ENCODE measurements at regions of chr12 and their contacts with region 1.

Region 1: DNA sequence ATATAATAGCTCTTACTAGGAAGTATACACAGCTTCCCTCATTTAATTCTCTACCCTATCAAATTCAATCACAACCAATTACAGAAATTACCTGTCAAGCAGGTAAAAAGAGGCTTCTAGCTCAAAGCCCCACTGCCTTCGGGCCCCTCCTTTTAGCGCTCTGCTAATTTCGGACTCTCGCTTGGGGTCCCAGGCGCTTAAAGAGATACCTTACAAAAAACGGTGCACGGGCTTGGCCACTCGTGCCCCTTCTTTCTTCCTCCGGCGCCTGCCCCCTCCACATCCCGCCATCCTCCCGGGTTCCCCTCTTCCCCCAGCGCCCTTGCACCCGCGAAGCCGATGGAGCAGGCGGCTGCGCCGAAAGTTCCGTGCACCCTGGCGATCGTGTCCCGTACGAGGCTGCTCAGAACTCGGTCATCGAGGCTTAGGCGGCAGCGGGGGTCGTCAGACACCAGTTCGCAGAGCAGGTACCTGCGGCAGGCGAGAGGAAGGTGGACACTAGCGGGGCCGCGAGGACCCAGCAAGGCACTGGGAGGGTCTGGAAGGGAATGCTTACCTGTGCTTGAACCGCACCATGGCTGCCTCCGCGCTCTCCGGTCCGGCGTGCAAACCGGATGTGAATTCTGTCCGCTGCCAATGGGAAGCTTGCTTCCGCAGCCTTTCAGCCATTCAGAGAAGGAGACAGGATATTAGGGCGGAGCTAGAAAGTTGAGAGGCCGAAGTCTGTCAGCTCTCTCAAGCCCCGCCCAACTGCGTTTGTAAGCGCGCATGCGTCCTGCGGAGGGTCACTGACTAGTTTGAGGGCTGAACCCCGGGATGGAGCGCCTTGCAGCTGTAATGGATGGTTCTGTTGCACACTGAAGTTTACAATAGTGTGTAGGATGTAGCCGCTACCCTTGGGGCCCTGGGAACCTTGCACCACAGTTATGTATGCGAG is at the start of gene POP5:
- DNase-seq: peak; percentile 72 to 93 (median 89)
- ATAC-seq: peak; percentile 97
- H3K4me3 ChIP-seq: peak within 1 kb of the TSS; percentile 99
- H3K4me3 Mint-ChIP-seq: peak within 1 kb of the TSS; percentile 95 to 99 (median 98)
- H3K27ac ChIP-seq: peak within 1 kb of the TSS; percentile 77
- H3K27ac Mint-ChIP-seq: peak within 1 kb of the TSS; percentile 81 to 97 (median 94)
- H3K4me1 ChIP-seq: peaks cover 4 to 21% of the 10 kb centered on the region in 2 donors
- H3K4me1 Mint-ChIP-seq: peaks cover 24 to 47% (median 34%) of the 10 kb centered on the region in 7 donors
- H3K27me3 ChIP-seq: no peaks in the 10 kb centered on the region
- H3K27me3 Mint-ChIP-seq: peaks cover 0 to 27% (median 7%) of the 10 kb centered on the region in 5 donors
- total RNA-seq, gene POP5: 42.9 to 86.8 (median 59.0) TPM

Region 2: DNA sequence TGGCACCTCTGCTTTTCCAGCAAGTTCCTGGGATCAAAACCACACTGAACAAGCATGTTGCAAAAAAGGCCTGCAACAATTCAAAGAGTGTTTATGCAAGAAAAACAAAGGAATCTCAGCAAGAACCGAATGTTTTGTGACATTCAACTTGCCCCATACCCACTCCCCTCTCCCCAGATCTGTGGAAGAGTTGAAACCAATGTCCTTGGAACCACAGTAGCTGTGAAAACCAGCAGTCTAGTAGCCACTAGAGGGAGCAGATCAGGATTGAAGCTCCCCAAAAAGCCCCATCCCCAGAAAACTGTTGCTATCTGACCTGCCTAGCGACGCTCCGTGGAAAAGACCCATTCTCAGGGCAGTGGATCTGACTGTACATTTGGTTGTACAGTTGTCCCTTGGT is 886.0 kb before region 1 on chr12:
- CTCF ChIA-PET with region 1: no interaction called
- POLR2A ChIA-PET with region 1: no interaction called
- intact Hi-C with region 1: no loop called
- DNase-seq: no peak
- ATAC-seq: no peak
- H3K4me3 ChIP-seq: no peak overlapping the region
- H3K4me3 Mint-ChIP-seq: no peak overlapping the region
- H3K27ac ChIP-seq: no peak overlapping the region
- H3K27ac Mint-ChIP-seq: no peak overlapping the region
- H3K4me1 ChIP-seq: no peaks in the 10 kb centered on the region
- H3K4me1 Mint-ChIP-seq: no peaks in the 10 kb centered on the region
- H3K27me3 ChIP-seq: no peaks in the 10 kb centered on the region
- H3K27me3 Mint-ChIP-seq: peaks cover 0 to 3% (median 0%) of the 10 kb centered on the region in 5 donors

Region 3: GRCh38 chr12:120292661-120293531 is 288.2 kb before region 1 on chr12 and contains the start of gene RNU4-1:
- CTCF ChIA-PET with region 1: no interaction called
- POLR2A ChIA-PET with region 1: interaction called, 10 read pairs
- intact Hi-C with region 1: no loop called
- DNase-seq: peak; percentile 51 to 93 (median 89)
- ATAC-seq: peak; percentile 58
- H3K4me3 ChIP-seq: peak within 1 kb of the TSS; percentile 64
- H3K4me3 Mint-ChIP-seq: no peak within 1 kb of the TSS
- H3K27ac ChIP-seq: peak within 1 kb of the TSS; percentile 100
- H3K27ac Mint-ChIP-seq: peak within 1 kb of the TSS in 1 of 9 donors; percentile 62
- H3K4me1 ChIP-seq: no peaks in the 10 kb centered on the region
- H3K4me1 Mint-ChIP-seq: peaks cover 0 to 9% (median 4%) of the 10 kb centered on the region in 7 donors
- H3K27me3 ChIP-seq: no peaks in the 10 kb centered on the region
- H3K27me3 Mint-ChIP-seq: peaks cover 0 to 14% (median 0%) of the 10 kb centered on the region in 5 donors
- total RNA-seq, gene RNU4-1: 319 to 3,107 (median 1,510) TPM

Region 4: GRCh38 chr12:120445911-120446843 is 134.9 kb before region 1 on chr12 and contains the starts of genes GATC and TRIAP1:
- CTCF ChIA-PET with region 1: no interaction called
- POLR2A ChIA-PET with region 1: no interaction called
- intact Hi-C with region 1: loop called in 1 of 2 experiments (anchors 5 kb)
- DNase-seq: peak; percentile 76 to 93 (median 84)
- ATAC-seq: peak; percentile 98
- H3K4me3 ChIP-seq: peak within 1 kb of the TSS; percentile 99
- H3K4me3 Mint-ChIP-seq: peak within 1 kb of the TSS; percentile 93 to 99 (median 98)
- H3K27ac ChIP-seq: peak within 1 kb of the TSS; percentile 91
- H3K27ac Mint-ChIP-seq: peak within 1 kb of the TSS; percentile 95 to 100 (median 98)
- H3K4me1 ChIP-seq: peaks cover 15 to 24% of the 10 kb centered on the region in 2 donors
- H3K4me1 Mint-ChIP-seq: peaks cover 14 to 45% (median 29%) of the 10 kb centered on the region in 7 donors
- H3K27me3 ChIP-seq: no peaks in the 10 kb centered on the region
- H3K27me3 Mint-ChIP-seq: peaks cover 0 to 2% (median 0%) of the 10 kb centered on the region in 5 donors
- total RNA-seq, gene GATC: 21.8 to 30.6 (median 26.9) TPM
- total RNA-seq, gene TRIAP1: 15.9 to 38.0 (median 19.6) TPM

Region 5: GRCh38 chr12:120528861-120529525 is 52.1 kb before region 1 on chr12 and contains the start of gene COQ5:
- CTCF ChIA-PET with region 1: no interaction called
- POLR2A ChIA-PET with region 1: interaction called, 8 read pairs
- intact Hi-C with region 1: loop called (anchors 1 kb)
- DNase-seq: peak; percentile 64 to 83 (median 80)
- ATAC-seq: peak; percentile 97
- H3K4me3 ChIP-seq: peak within 1 kb of the TSS; percentile 75
- H3K4me3 Mint-ChIP-seq: peak within 1 kb of the TSS; percentile 93 to 100 (median 99)
- H3K27ac ChIP-seq: peak within 1 kb of the TSS; percentile 88
- H3K27ac Mint-ChIP-seq: peak within 1 kb of the TSS; percentile 96 to 100 (median 98)
- H3K4me1 ChIP-seq: no peaks in the 10 kb centered on the region
- H3K4me1 Mint-ChIP-seq: peaks cover 10 to 30% (median 23%) of the 10 kb centered on the region in 7 donors
- H3K27me3 ChIP-seq: no peaks in the 10 kb centered on the region
- H3K27me3 Mint-ChIP-seq: no peaks in the 10 kb centered on the region
- total RNA-seq, gene COQ5: 11.3 to 26.1 (median 23.5) TPM

Region 6: DNA sequence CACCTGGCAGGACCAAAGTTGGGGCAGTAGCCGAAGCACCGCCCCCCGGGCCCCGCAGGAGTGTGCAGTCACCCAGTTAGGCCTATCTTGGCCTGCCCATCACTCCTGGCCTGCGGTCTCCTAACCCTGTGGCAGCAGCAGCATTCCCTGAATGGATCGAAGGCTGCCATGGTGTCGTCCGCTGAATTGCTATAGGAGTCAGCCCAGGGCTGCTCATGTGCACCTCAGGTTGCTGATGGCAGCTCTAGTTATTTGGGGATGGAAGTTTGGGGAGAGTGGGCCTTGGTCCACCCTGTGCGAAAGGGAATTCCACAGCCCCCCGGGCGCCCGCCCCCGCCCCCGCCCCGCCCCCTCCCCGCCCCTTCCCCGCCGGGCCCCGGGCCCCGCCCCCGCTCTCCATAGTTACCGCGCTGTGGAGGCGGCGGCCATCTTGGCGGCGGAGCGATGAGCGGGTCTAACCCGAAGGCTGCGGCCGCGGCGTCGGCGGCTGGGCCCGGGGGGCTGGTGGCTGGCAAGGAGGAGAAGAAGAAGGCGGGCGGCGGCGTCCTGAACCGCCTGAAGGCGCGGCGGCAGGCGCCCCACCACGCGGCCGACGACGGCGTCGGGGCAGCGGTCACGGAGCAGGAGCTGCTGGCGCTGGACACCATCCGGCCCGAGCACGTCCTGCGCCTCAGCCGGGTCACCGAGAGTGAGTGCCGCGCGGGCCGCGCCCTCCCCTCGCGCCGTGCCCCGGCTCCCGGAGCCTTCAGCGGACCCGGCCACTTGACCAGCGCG is 129.2 kb after region 1 on chr12 and contains the start of gene UNC119B:
- CTCF ChIA-PET with region 1: interaction called, 3 read pairs
- POLR2A ChIA-PET with region 1: interaction called, 3 read pairs
- intact Hi-C with region 1: loop called (anchors 1 kb)
- DNase-seq: peak; percentile 53 to 82 (median 69)
- ATAC-seq: peak; percentile 92
- H3K4me3 ChIP-seq: peak within 1 kb of the TSS; percentile 69
- H3K4me3 Mint-ChIP-seq: peak within 1 kb of the TSS; percentile 87 to 98 (median 95)
- H3K27ac ChIP-seq: peak within 1 kb of the TSS; percentile 83
- H3K27ac Mint-ChIP-seq: peak within 1 kb of the TSS; percentile 87 to 96 (median 92)
- H3K4me1 ChIP-seq: peaks cover 5 to 7% of the 10 kb centered on the region in 2 donors
- H3K4me1 Mint-ChIP-seq: peaks cover 20 to 40% (median 37%) of the 10 kb centered on the region in 7 donors
- H3K27me3 ChIP-seq: no peaks in the 10 kb centered on the region
- H3K27me3 Mint-ChIP-seq: no peaks in the 10 kb centered on the region
- total RNA-seq, gene UNC119B: 10.9 to 26.7 (median 18.8) TPM

Region 7: GRCh38 chr12:121015825-121016766 is 435.0 kb after region 1 on chr12 and contains the start of gene C12orf43:
- CTCF ChIA-PET with region 1: no interaction called
- POLR2A ChIA-PET with region 1: no interaction called
- intact Hi-C with region 1: loop called in 1 of 2 experiments (anchors 5 kb)
- DNase-seq: peak; percentile 74 to 93 (median 89)
- ATAC-seq: peak; percentile 99
- H3K4me3 ChIP-seq: peak within 1 kb of the TSS; percentile 88
- H3K4me3 Mint-ChIP-seq: peak within 1 kb of the TSS; percentile 93 to 99 (median 96)
- H3K27ac ChIP-seq: peak within 1 kb of the TSS; percentile 88
- H3K27ac Mint-ChIP-seq: peak within 1 kb of the TSS; percentile 89 to 97 (median 95)
- H3K4me1 ChIP-seq: peaks cover 6 to 11% of the 10 kb centered on the region in 2 donors
- H3K4me1 Mint-ChIP-seq: peaks cover 17 to 32% (median 24%) of the 10 kb centered on the region in 7 donors
- H3K27me3 ChIP-seq: no peaks in the 10 kb centered on the region
- H3K27me3 Mint-ChIP-seq: no peaks in the 10 kb centered on the region
- total RNA-seq, gene C12orf43: 11.8 to 24.2 (median 17.5) TPM

Region 8: GRCh38 chr12:121128970-121129810 is 548.1 kb after region 1 on chr12:
- CTCF ChIA-PET with region 1: no interaction called
- POLR2A ChIA-PET with region 1: no interaction called
- intact Hi-C with region 1: loop called in 1 of 2 experiments (anchors 5 kb)
- DNase-seq: peak; percentile 52 to 82 (median 81)
- ATAC-seq: peak; percentile 90
- H3K4me3 ChIP-seq: peak overlapping the region; percentile 64
- H3K4me3 Mint-ChIP-seq: peak overlapping the region; percentile 76 to 93 (median 82)
- H3K27ac ChIP-seq: peak overlapping the region; percentile 64
- H3K27ac Mint-ChIP-seq: peak overlapping the region; percentile 80 to 99 (median 94)
- H3K4me1 ChIP-seq: peaks cover 34 to 42% of the 10 kb centered on the region in 2 donors
- H3K4me1 Mint-ChIP-seq: peaks cover 48 to 88% (median 82%) of the 10 kb centered on the region in 7 donors
- H3K27me3 ChIP-seq: no peaks in the 10 kb centered on the region
- H3K27me3 Mint-ChIP-seq: no peaks in the 10 kb centered on the region

Measured in naive thymus-derived CD4-positive, alpha-beta T cell (primary cell).